CD4-positive, alpha-beta T cell (primary cell): ENCODE measurements at regions of chr1 and their contacts with region 1.

Region 1: DNA sequence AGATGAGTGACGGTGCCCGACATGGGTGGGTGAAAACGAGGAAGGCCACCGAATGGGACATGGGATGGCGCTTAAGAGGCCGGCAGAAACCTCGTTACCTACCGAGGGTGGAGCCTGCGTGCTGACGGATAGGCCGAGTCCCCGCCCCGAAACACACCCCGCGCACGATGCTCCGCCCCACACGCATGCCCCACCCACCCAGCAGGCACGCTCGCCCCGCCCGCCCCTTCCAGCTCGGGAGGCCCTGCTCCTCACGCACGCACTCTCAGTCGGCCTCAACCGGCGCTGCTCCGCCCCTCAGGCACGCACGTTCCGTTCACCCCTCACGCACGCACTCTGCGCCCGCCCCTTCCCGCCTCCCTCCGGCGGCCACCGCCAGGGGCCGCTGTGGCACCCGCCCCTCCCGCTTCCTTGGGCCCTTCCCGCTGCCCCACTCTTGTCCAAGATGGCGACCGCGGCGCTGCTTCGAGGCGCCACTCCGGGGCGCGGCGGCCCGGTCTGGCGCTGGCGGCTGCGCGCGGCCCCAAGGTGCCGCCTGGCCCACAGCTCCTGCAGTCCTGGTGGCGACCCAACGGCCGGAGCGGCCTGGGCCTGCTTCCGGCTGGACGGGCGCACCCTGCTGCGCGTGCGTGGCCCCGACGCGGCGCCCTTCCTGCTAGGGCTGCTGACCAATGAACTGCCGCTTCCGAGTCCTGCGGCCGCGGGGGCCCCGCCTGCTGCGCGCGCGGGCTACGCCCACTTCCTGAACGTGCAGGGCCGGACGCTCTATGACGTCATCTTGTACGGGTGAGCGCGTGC is at the start of gene IBA57:
- DNase-seq: peak; percentile 99 to 100 (median 100)
- ATAC-seq: peak; percentile 79
- H3K4me3 ChIP-seq: peak within 1 kb of the TSS; percentile 70
- H3K4me3 Mint-ChIP-seq: peak within 1 kb of the TSS; percentile 95
- H3K27ac ChIP-seq: peak within 1 kb of the TSS; percentile 88 to 97
- H3K27ac Mint-ChIP-seq: peak within 1 kb of the TSS; percentile 98
- H3K4me1 ChIP-seq: peaks cover 45% of the 10 kb centered on the region
- H3K4me1 Mint-ChIP-seq: peaks cover 49% of the 10 kb centered on the region
- H3K27me3 ChIP-seq: no peaks in the 10 kb centered on the region
- H3K27me3 Mint-ChIP-seq: no peaks in the 10 kb centered on the region
- CTCF ChIP-seq: peak; percentile 58
- total RNA-seq, gene IBA57: 19.7 to 19.9 TPM

Region 2: GRCh38 chr1:227734856-227735538 is 430.6 kb before region 1 on chr1 and contains the starts of genes JMJD4 and SNAP47:
- CTCF ChIA-PET with region 1: interaction called, 3 read pairs
- POLR2A ChIA-PET with region 1: no interaction called
- intact Hi-C with region 1: loop called in 1 of 2 experiments (anchors 5 kb)
- DNase-seq: peak; percentile 86 to 96 (median 92)
- ATAC-seq: peak; percentile 90
- H3K4me3 ChIP-seq: peak within 1 kb of the TSS; percentile 71
- H3K4me3 Mint-ChIP-seq: peak within 1 kb of the TSS; percentile 92
- H3K27ac ChIP-seq: peak within 1 kb of the TSS in 1 of 2 donors; percentile 69
- H3K27ac Mint-ChIP-seq: peak within 1 kb of the TSS; percentile 83
- H3K4me1 ChIP-seq: peaks cover 37% of the 10 kb centered on the region
- H3K4me1 Mint-ChIP-seq: peaks cover 56% of the 10 kb centered on the region
- H3K27me3 ChIP-seq: no peaks in the 10 kb centered on the region
- H3K27me3 Mint-ChIP-seq: no peaks in the 10 kb centered on the region
- CTCF ChIP-seq: no peak
- total RNA-seq, gene JMJD4: 11.4 to 11.9 TPM
- total RNA-seq, gene SNAP47: 12.8 to 14.0 TPM

Region 3: DNA sequence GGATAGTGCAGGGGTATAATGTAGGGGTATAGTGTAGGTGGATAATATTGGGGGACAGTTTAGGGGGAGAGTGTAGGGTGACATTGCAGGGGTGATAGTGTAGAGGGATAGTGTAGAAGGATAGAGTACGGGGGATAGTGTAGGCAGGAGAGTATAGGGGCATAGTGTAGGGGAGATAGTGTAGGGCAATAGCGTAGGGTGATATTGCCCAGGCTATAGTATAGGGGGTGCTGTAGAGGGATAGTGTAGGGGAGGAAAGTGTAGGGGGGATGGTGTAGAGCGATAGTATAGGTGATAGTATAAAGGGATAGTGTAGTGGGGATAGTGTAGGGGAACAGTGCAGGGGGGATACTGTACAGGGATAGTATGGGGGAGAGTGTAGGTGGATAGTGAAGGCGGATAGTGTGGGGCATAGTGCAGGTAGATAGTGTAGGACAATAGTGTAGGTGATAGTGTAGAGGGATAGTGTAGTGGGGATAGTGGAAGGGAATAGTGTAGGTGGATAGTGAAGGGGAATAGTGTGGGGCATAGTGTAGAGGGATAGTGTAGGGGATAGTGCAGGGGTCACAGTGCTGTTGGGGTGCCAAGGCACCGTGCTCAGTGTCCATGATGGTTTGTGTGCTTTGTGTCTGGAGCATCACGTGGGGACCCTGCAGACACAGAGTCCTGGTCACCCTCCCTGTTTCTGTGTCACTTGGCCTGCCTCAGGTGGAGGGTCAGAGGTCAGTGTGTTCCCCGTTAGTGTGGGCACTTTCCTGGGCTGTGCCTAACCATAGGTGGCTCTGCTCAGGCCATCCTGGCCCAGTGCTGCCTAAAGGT is 93.5 kb before region 1 on chr1:
- CTCF ChIA-PET with region 1: no interaction called
- POLR2A ChIA-PET with region 1: no interaction called
- intact Hi-C with region 1: no loop called
- DNase-seq: no peak
- ATAC-seq: no peak
- H3K4me3 ChIP-seq: no peak overlapping the region
- H3K4me3 Mint-ChIP-seq: no peak overlapping the region
- H3K27ac ChIP-seq: no peak overlapping the region
- H3K27ac Mint-ChIP-seq: no peak overlapping the region
- H3K4me1 ChIP-seq: no peaks in the 10 kb centered on the region
- H3K4me1 Mint-ChIP-seq: peaks cover 7% of the 10 kb centered on the region
- H3K27me3 ChIP-seq: peaks cover 1 to 18% of the 10 kb centered on the region in 2 experiments
- H3K27me3 Mint-ChIP-seq: no peaks in the 10 kb centered on the region
- CTCF ChIP-seq: no peak

Region 4: GRCh38 chr1:228082135-228082891 is 83.3 kb before region 1 on chr1 and contains the start of gene ARF1:
- CTCF ChIA-PET with region 1: interaction called, 6 read pairs
- POLR2A ChIA-PET with region 1: interaction called, 38 read pairs
- intact Hi-C with region 1: loop called (anchors 5 kb)
- DNase-seq: peak; percentile 81 to 97 (median 93)
- ATAC-seq: peak; percentile 84
- H3K4me3 ChIP-seq: peak within 1 kb of the TSS; percentile 80
- H3K4me3 Mint-ChIP-seq: peak within 1 kb of the TSS; percentile 97
- H3K27ac ChIP-seq: peak within 1 kb of the TSS; percentile 86 to 89
- H3K27ac Mint-ChIP-seq: peak within 1 kb of the TSS; percentile 99
- H3K4me1 ChIP-seq: peaks cover 62% of the 10 kb centered on the region
- H3K4me1 Mint-ChIP-seq: peaks cover 53% of the 10 kb centered on the region
- H3K27me3 ChIP-seq: no peaks in the 10 kb centered on the region
- H3K27me3 Mint-ChIP-seq: no peaks in the 10 kb centered on the region
- CTCF ChIP-seq: no peak
- total RNA-seq, gene ARF1: 318 to 322 TPM

Region 5: DNA sequence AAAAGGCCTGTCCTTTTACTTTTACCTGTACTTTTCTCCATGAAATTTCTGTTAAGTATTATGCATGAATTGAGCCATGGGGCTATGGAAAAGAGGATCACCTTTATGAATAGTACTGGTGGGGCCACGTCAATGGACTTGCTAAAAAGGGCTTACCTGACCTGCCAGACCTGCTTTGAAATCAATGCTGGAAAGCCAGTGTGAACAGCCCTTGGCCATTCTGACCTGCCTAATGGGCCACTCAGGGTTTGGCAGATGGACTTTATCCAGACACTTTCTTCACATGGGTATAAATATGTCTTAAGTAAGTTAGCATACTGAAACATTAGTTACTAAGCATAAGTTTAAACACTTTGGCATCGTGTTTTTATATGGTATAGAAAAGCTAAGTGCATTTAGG is 33.8 kb before region 1 on chr1:
- CTCF ChIA-PET with region 1: interaction called, 47 read pairs
- POLR2A ChIA-PET with region 1: interaction called, 14 read pairs
- intact Hi-C with region 1: loop called (anchors 1 to 2 kb)
- DNase-seq: no peak
- ATAC-seq: no peak
- H3K4me3 ChIP-seq: no peak overlapping the region
- H3K4me3 Mint-ChIP-seq: no peak overlapping the region
- H3K27ac ChIP-seq: no peak overlapping the region
- H3K27ac Mint-ChIP-seq: no peak overlapping the region
- H3K4me1 ChIP-seq: peaks cover 4% of the 10 kb centered on the region
- H3K4me1 Mint-ChIP-seq: peaks cover 5% of the 10 kb centered on the region
- H3K27me3 ChIP-seq: peaks cover 4 to 8% of the 10 kb centered on the region in 2 experiments
- H3K27me3 Mint-ChIP-seq: peaks cover 22% of the 10 kb centered on the region
- CTCF ChIP-seq: no peak

Region 6: GRCh38 chr1:228212966-228213844 is 47.6 kb after region 1 on chr1:
- CTCF ChIA-PET with region 1: interaction called, 9 read pairs
- POLR2A ChIA-PET with region 1: interaction called, 6 read pairs
- intact Hi-C with region 1: loop called in 1 of 2 experiments (anchors 1 kb)
- DNase-seq: peak; percentile 83 to 96 (median 90)
- ATAC-seq: peak; percentile 89
- H3K4me3 ChIP-seq: peak overlapping the region; percentile 64
- H3K4me3 Mint-ChIP-seq: peak overlapping the region; percentile 92
- H3K27ac ChIP-seq: peak overlapping the region in 1 of 2 donors; percentile 21
- H3K27ac Mint-ChIP-seq: peak overlapping the region; percentile 86
- H3K4me1 ChIP-seq: peaks cover 22% of the 10 kb centered on the region
- H3K4me1 Mint-ChIP-seq: peaks cover 12% of the 10 kb centered on the region
- H3K27me3 ChIP-seq: no peaks in the 10 kb centered on the region
- H3K27me3 Mint-ChIP-seq: no peaks in the 10 kb centered on the region
- CTCF ChIP-seq: peak; percentile 59

Region 7: DNA sequence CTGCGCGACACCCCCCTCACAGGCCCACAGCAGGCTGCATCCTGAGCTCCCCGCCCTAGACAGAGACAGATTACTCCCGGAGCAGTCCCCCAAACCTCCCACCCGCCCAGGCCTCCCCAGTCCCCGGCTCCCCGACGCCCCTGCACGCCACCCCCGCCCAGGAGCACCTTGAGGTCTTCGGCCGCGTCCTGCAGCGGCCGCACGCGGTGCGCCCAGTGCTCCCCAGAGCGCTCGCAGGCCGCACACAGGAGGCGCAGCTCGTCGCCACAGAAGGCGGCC is 240.4 kb after region 1 on chr1:
- CTCF ChIA-PET with region 1: interaction called, 3 read pairs
- POLR2A ChIA-PET with region 1: interaction called, 10 read pairs
- intact Hi-C with region 1: loop called in 1 of 2 experiments (anchors 5 kb)
- DNase-seq: no peak
- ATAC-seq: peak; percentile 10
- H3K4me3 ChIP-seq: peak overlapping the region; percentile 79
- H3K4me3 Mint-ChIP-seq: peak overlapping the region; percentile 96
- H3K27ac ChIP-seq: peak overlapping the region in 1 of 2 donors; percentile 39
- H3K27ac Mint-ChIP-seq: peak overlapping the region; percentile 90
- H3K4me1 ChIP-seq: peaks cover 65% of the 10 kb centered on the region
- H3K4me1 Mint-ChIP-seq: peaks cover 47% of the 10 kb centered on the region
- H3K27me3 ChIP-seq: no peaks in the 10 kb centered on the region
- H3K27me3 Mint-ChIP-seq: no peaks in the 10 kb centered on the region
- CTCF ChIP-seq: no peak

Region 8: DNA sequence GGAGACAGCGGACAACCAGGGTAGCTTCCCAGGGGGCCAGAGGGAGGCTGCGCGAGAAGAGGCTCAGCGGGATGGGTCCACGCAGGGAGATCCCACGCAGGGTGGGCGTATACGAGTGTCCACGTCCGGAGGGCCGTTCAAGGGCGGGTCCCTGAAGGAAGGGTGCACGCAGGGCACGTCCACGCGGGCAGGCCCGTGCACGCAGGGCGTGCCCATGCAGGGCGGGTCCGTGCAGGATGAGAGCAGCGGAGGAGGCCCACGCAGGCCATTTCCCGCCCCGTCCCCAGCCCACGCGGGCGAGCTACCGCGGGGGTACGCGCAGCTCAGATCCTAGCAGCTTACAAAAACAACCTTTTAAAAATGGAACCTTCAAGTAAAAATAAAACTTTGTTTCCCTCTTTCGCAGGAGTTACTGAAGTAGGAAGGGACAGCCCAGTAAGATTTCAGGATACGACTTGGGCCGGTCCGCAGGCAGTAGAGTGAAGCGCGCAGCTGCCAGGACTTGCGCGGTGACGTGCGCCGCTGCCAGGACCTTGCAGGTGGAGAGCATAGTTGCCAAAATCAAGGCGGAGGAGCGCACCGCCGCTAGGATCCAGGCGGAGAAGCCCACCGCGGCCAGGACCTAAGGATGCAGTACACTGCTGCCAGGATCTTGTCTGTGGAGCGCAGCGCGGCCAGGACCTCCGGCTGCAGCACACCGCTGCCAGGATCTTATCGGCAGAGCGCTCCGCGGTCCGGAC is 321.2 kb after region 1 on chr1:
- CTCF ChIA-PET with region 1: no interaction called
- POLR2A ChIA-PET with region 1: interaction called, 15 read pairs
- intact Hi-C with region 1: no loop called
- DNase-seq: peak; percentile 66 to 91 (median 78)
- ATAC-seq: peak; percentile 77
- H3K4me3 ChIP-seq: peak overlapping the region; percentile 85
- H3K4me3 Mint-ChIP-seq: peak overlapping the region; percentile 95
- H3K27ac ChIP-seq: peak overlapping the region; percentile 100
- H3K27ac Mint-ChIP-seq: peak overlapping the region; percentile 100
- H3K4me1 ChIP-seq: peaks cover 43% of the 10 kb centered on the region
- H3K4me1 Mint-ChIP-seq: peaks cover 43% of the 10 kb centered on the region
- H3K27me3 ChIP-seq: no peaks in the 10 kb centered on the region
- H3K27me3 Mint-ChIP-seq: no peaks in the 10 kb centered on the region
- CTCF ChIP-seq: no peak